ENCODE measurements at regions of chr5 and their contacts with region 1.

Region 1: DNA sequence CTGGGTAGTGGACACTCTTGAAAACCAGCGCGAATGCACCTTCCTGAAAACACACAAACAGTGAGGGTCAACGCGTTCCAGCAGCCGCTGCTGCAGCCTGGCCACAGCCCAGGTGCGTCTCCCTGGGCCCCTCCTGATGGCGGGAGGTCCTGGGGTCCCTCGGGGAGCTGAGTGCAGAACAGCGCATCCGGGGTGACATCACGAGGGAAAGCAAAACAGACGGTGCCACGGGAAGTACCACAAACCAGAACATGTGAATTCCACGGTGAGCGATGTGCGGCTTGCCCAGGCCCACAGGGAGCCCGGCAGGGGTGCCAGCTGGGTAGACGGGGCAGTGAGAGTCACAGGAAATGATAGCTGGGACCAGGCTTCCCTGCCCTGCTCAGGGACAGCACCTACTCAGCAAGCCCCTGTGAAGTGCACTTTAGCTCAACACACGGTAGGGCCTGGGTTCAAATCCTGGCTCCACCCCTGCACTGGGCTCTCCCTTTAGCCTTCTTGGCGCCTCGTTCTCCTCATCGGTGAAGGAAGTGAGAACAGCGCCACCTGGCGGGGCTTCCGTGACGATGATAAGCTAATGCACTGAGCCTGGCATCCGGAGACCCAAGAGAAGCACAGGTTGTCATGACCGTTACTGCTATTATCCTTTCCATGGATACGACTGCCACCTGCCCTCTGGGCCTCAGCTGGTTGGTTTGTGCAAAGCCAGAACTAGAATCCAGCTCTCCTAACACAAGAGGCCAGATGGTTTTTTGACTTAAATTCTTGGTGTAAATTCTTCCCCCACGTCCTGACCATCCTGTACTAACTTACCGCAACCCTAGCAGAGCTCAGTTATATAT is 24.6 kb downstream of the GFPT2 start:
- DNase-seq: peak; percentile 63
- ATAC-seq: peak; percentile 97
- H3K4me3 ChIP-seq: no peak overlapping the region
- H3K27ac ChIP-seq: no peak overlapping the region
- H3K4me1 ChIP-seq: peaks cover 3% of the 10 kb centered on the region
- H3K27me3 ChIP-seq: no peaks in the 10 kb centered on the region
- CTCF ChIP-seq: peak; percentile 90

Region 2: DNA sequence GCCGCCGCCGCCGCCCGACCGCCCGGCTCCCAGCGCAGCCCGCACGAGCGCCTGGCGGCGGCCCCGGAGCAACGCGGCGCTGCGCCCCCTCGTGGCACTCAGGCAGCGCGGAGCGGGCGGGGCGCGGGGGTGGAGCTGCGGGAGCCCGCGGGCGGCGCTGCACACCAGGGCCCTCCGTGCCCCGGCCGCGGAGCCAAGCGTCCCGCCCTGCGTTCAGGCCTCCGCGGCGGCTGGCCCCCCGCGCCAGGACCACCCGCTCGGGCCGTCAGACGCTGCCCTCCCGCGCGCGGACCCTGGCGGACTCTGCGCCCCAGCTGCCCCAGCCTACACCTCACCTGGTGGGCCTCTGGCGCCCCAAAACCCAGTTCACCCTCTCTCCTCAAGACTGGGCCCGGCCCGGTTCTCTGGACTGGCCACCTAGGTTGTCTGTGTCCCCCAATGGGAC is 119.4 kb before region 1 on chr5 and contains the start of gene RASGEF1C:
- CTCF ChIA-PET with region 1: no interaction called
- POLR2A ChIA-PET with region 1: no interaction called
- in situ Hi-C with region 1: no loop called
- intact Hi-C with region 1: loop called (anchors 10 kb)
- DNase-seq: no peak
- ATAC-seq: peak; percentile 96
- H3K4me3 ChIP-seq: peak within 1 kb of the TSS; percentile 43 to 46; a peak in 3 of 4 replicates
- H3K27ac ChIP-seq: no peak within 1 kb of the TSS
- H3K4me1 ChIP-seq: peaks cover 6% of the 10 kb centered on the region; the same call in 1 of the 2 replicates
- H3K27me3 ChIP-seq: no peaks in the 10 kb centered on the region
- CTCF ChIP-seq: peak; percentile 91
- total RNA-seq, gene RASGEF1C: 0.49 TPM

Region 3: DNA sequence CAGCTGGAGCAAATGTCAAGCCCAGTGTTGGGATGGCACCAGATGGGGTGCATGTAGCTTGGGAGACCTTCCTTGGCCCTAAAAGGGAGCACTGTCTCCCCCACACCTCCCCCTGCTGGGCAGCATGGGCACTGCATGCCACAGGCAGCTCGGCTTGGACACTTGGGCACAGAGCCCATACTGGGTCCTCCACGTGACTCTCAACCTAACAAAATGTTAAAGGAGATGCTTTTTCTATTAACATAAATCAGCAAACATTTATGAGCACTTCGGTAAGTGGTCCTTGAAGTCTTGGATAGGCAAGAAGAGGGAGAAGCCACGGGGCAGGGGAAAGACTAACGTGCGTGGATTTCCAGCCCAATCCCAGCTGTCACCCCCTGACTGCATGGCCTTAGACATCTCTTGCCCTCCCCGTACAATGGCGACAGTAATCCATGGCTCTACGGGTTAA is 12.7 kb before region 1 on chr5:
- CTCF ChIA-PET with region 1: interaction called, 12 read pairs
- POLR2A ChIA-PET with region 1: no interaction called
- in situ Hi-C with region 1: no loop called
- intact Hi-C with region 1: no loop called
- DNase-seq: no peak
- ATAC-seq: peak; percentile 86
- H3K4me3 ChIP-seq: no peak overlapping the region
- H3K27ac ChIP-seq: no peak overlapping the region
- H3K4me1 ChIP-seq: no peaks in the 10 kb centered on the region
- H3K27me3 ChIP-seq: no peaks in the 10 kb centered on the region
- CTCF ChIP-seq: peak; percentile 98

Region 4: DNA sequence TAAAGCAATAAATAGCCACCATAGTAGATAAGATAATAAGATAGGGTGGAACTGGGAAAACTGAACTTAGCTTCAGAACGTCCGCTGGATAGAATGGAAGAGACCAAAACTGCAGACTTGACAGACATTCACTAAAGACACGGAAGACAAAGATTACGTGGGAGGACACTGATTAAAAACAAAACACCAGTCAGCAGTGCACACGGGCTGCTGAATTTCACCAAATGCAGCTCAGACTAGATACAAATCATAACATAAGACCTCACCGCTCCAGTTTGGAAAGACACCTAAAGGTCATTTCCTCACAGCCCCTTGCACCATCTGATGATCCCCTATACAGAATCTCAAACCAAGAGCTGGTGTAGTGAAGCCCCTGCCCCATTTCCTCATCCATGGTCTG is 414.2 kb after region 1 on chr5:
- CTCF ChIA-PET with region 1: no interaction called
- POLR2A ChIA-PET with region 1: no interaction called
- in situ Hi-C with region 1: no loop called
- intact Hi-C with region 1: no loop called
- DNase-seq: no peak
- ATAC-seq: no peak
- H3K4me3 ChIP-seq: no peak overlapping the region
- H3K27ac ChIP-seq: no peak overlapping the region
- H3K4me1 ChIP-seq: no peaks in the 10 kb centered on the region
- H3K27me3 ChIP-seq: peaks cover 46% of the 10 kb centered on the region
- CTCF ChIP-seq: no peak

Measured in Panc1 (cell line).